Thyroid gland (tissue), 4 donors: ENCODE measurements at regions of chr1 and their contacts with region 1.

Region 1: DNA sequence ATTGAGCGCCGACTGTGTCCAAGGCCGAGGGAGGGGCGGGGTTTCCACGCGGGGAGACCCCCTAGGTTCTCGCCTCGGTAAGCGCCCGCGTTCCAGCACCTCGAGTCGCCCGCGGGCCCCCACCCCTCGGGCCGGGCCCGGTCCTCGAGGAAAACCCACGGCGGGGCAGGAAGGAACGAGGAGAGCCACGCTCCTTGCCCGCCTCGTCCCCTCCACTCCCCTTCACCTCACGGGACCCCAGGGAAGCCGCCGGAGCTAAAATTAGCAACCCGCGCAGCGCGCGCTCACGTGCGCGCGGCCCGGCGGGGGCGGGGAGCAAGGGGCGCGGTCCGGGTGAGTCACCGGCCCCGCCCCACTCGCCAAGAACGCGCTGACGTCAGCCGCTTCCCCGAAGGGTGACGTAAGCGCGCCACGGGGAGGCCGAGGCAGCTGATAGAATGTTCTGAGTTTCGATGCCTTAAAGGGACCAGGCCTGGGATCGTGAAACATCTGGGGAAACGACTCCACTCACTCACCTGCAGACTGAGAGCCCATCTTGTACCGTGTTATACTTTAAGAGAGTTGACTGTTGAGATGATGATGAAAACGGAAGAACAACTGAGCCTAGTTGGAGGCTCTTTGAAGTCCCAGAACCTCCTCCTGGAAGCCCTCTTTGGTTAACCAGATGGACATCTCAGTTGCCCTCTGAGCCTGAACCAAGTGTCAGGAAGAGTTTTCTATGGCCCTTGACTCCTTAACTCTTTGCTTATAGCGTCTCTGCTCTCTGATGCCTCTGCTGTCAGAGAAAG is 49.7 kb upstream of the ATF3 start:
- DNase-seq: peak; percentile 91 to 94
- H3K4me3 ChIP-seq: peak overlapping the region in 2 of 3 donors; percentile 36 to 69
- H3K27ac ChIP-seq: peak overlapping the region; percentile 77 to 99 (median 93)
- H3K4me1 ChIP-seq: peaks cover 5 to 16% of the 10 kb centered on the region in 2 donors
- H3K27me3 ChIP-seq: no peaks in the 10 kb centered on the region
- CTCF ChIP-seq: no peak
- POLR2A ChIP-seq: peak; percentile 54 to 95

Region 2: GRCh38 chr1:212498283-212499040 is 60.4 kb before region 1 on chr1:
- intact Hi-C with region 1: loop called (anchors 10 kb)
- DNase-seq: peak; percentile 58 to 70
- H3K4me3 ChIP-seq: no peak overlapping the region
- H3K27ac ChIP-seq: no peak overlapping the region
- H3K4me1 ChIP-seq: peaks cover 0 to 9% of the 10 kb centered on the region in 2 donors
- H3K27me3 ChIP-seq: no peaks in the 10 kb centered on the region
- CTCF ChIP-seq: no peak
- POLR2A ChIP-seq: no peak